GM10248 (cell line): ENCODE measurements at regions of chr3 and their contacts with region 1.

Region 1: GRCh38 chr3:197599089-197599765 is 43.5 kb upstream of the BDH1 start:
- DNase-seq: peak; percentile 93
- CTCF ChIP-seq: peak; percentile 86

Region 2: GRCh38 chr3:197456261-197457091 is 142.8 kb before region 1 on chr3:
- CTCF ChIA-PET with region 1: no interaction called
- POLR2A ChIA-PET with region 1: no interaction called
- DNase-seq: peak; percentile 71
- CTCF ChIP-seq: no peak

Region 3: DNA sequence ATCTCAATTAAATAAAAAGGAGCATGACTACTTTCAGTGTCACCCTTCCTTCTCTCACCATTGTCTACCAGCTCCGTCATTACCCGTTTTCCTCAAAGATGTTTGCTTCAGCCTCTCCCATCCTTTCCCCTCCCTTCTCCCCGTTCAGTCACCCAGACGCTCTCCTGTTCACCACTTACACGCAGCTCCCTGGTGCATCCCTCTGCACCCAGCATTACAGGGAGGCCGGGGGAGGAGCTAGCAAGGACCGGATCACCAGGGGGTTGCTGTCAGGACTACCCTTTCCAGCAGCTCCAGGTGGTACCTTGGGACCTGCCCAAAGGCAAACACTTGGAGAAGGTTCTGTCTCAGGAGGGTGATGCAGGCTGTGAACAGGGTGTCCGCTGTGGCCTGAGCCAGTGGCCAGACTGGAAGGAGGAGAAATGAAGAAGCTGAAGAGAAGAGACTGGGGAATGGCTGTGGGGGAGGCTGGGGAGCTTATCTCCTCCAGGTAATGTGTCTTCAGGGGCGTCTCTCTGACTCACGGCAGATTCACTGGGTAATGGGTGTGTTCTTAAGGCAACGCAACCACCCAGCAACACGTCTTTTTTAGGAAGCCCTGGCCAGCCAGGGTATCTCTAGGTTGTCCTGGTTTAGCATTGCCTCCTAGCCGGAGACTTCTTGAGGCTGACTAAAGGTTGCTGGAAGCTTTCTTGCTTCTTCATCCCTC is 21.7 kb before region 1 on chr3:
- CTCF ChIA-PET with region 1: interaction called, 10 read pairs
- POLR2A ChIA-PET with region 1: no interaction called
- DNase-seq: no peak
- CTCF ChIP-seq: no peak

Region 4: DNA sequence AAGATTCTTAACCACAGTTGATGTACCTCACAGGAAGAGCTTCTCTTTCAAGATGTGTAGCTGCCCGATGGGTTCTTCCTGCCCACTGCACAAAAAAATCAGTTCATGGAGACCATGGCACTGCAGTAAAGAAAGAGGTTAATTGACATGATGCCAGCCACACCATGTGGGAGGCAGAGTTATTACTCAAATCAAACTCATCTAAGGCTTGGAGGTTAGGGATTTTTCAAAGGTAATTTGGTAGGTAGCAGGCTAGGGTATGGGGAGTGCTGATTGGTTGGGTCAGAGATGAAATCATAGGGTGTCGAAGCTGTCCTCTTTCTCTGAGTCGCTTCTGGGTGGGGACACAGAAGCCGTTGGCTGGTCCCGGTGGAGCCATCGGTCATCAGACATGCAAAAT is 14.0 kb after region 1 on chr3:
- CTCF ChIA-PET with region 1: interaction called, 48 read pairs
- POLR2A ChIA-PET with region 1: no interaction called
- DNase-seq: no peak
- CTCF ChIP-seq: no peak

Region 5: DNA sequence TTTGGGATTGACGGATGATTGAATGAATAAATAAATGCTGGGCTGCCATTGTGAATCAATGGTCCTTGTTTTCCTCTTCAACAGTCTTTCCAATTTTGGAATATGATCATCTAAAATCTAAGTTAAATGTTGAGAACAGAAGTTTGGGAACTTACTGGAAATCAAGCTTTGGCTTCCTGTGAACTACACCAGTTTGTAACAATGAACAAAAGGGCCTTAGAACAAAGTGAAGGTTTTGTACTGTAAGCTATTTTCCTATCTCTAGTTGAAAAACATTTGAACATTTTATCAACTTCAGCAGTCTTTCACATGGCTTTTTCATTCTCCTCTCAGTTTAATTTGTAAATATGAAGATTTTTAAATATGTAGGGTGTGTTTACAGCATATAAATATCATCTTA is 71.1 kb after region 1 on chr3:
- CTCF ChIA-PET with region 1: interaction called, 12 read pairs
- POLR2A ChIA-PET with region 1: no interaction called
- DNase-seq: no peak
- CTCF ChIP-seq: no peak